CD4-positive, alpha-beta memory T cell (primary cell): ENCODE measurements at regions of chrX and their contacts with region 1.

Region 1: GRCh38 chrX:150587585-150588503 is 19.4 kb downstream of the MTM1 start:
- DNase-seq: peak in 4 of 5 donors; percentile 25 to 40 (median 32)
- H3K4me3 ChIP-seq: no peak overlapping the region
- H3K4me3 Mint-ChIP-seq: no peak overlapping the region
- H3K27ac ChIP-seq: no peak overlapping the region
- H3K27ac Mint-ChIP-seq: peak overlapping the region in 2 of 7 donors; percentile 17 to 71
- H3K4me1 ChIP-seq: peaks cover 4% of the 10 kb centered on the region
- H3K4me1 Mint-ChIP-seq: peaks cover 10 to 35% (median 29%) of the 10 kb centered on the region in 4 donors
- H3K27me3 ChIP-seq: no peaks in the 10 kb centered on the region
- H3K27me3 Mint-ChIP-seq: no peaks in the 10 kb centered on the region

Region 2: GRCh38 chrX:149950681-149951080 is 637.2 kb before region 1 on chrX:
- CTCF ChIA-PET with region 1: no interaction called
- POLR2A ChIA-PET with region 1: no interaction called
- intact Hi-C with region 1: no loop called
- DNase-seq: peak in 1 of 5 donors; percentile 19
- H3K4me3 ChIP-seq: no peak overlapping the region
- H3K4me3 Mint-ChIP-seq: no peak overlapping the region
- H3K27ac ChIP-seq: no peak overlapping the region
- H3K27ac Mint-ChIP-seq: no peak overlapping the region
- H3K4me1 ChIP-seq: no peaks in the 10 kb centered on the region
- H3K4me1 Mint-ChIP-seq: peaks cover 1 to 6% (median 5%) of the 10 kb centered on the region in 4 donors
- H3K27me3 ChIP-seq: no peaks in the 10 kb centered on the region
- H3K27me3 Mint-ChIP-seq: no peaks in the 10 kb centered on the region

Region 3: GRCh38 chrX:150486011-150486410 is 101.8 kb before region 1 on chrX:
- CTCF ChIA-PET with region 1: interaction called, 5 read pairs
- POLR2A ChIA-PET with region 1: no interaction called
- intact Hi-C with region 1: loop called (anchors 5 kb)
- DNase-seq: peak; percentile 41 to 49 (median 45)
- H3K4me3 ChIP-seq: no peak overlapping the region
- H3K4me3 Mint-ChIP-seq: no peak overlapping the region
- H3K27ac ChIP-seq: no peak overlapping the region
- H3K27ac Mint-ChIP-seq: no peak overlapping the region
- H3K4me1 ChIP-seq: peaks cover 17% of the 10 kb centered on the region
- H3K4me1 Mint-ChIP-seq: peaks cover 0 to 14% (median 6%) of the 10 kb centered on the region in 4 donors
- H3K27me3 ChIP-seq: no peaks in the 10 kb centered on the region
- H3K27me3 Mint-ChIP-seq: no peaks in the 10 kb centered on the region

Region 4: DNA sequence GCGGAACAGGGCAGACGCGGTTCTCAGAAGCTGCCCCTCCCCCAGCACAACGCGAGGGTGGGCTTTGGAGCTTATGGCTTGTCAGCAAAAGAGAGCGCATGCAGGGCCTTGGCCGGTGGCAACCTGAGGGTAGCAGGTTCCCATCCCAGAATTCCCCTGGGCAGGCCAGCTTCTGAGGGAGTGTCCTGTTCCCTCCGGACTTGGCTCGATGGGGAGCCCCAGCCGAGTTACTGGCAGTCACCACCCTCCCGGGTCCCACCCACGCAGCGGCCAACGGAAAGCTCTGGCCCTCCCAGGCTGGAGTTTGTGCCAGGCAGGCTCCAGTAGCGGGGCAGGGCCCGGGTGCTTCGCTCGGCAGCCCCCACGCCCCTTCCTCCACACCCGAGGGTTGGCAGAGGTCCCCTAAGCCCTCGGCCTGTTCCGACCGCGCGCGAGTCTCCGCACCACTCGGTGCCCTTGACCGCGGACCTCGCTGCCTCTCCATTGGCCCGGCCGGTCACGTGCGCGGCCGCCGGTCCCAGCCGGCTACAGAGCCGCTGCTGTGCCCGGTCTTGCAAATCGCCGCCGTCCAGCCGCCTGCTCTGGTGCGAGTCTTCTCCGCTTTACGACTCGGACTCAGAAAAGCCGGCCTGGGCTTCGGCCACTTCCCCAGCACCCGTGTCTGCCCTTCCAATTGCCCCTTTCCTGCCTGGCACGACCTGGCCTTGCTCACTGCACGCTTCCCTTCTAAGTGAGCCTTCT is 40.3 kb before region 1 on chrX:
- CTCF ChIA-PET with region 1: interaction called, 34 read pairs
- POLR2A ChIA-PET with region 1: no interaction called
- intact Hi-C with region 1: loop called (anchors 2 kb)
- DNase-seq: no peak
- H3K4me3 ChIP-seq: peak overlapping the region in 1 of 2 donors; percentile 35
- H3K4me3 Mint-ChIP-seq: peak overlapping the region; percentile 57 to 87 (median 79)
- H3K27ac ChIP-seq: no peak overlapping the region
- H3K27ac Mint-ChIP-seq: peak overlapping the region; percentile 37 to 93 (median 81)
- H3K4me1 ChIP-seq: peaks cover 30% of the 10 kb centered on the region
- H3K4me1 Mint-ChIP-seq: peaks cover 11 to 30% (median 19%) of the 10 kb centered on the region in 4 donors
- H3K27me3 ChIP-seq: no peaks in the 10 kb centered on the region
- H3K27me3 Mint-ChIP-seq: no peaks in the 10 kb centered on the region

Region 5: DNA sequence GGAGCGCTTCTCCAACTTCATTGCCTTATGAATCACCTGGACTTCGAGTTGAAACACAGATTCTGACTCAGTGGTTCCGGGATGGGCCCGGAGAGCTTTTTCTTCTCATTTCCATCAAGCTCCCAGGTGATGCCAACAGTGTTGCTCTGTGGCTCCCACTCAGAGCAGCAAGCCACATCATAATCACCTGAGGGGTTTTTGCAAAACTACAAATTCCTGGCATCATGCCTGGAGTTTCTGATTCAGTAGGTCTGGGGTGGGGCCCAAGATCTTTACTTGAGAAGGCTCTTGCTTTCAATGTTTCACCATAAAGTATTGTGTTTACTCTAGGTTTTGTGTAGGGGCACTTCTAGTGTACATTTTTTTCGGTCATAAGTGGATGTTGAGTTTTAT is 12.4 kb before region 1 on chrX:
- CTCF ChIA-PET with region 1: interaction called, 21 read pairs
- POLR2A ChIA-PET with region 1: interaction called, 3 read pairs
- intact Hi-C with region 1: loop called (anchors 1 kb)
- DNase-seq: peak in 4 of 5 donors; percentile 30 to 85 (median 46)
- H3K4me3 ChIP-seq: peak overlapping the region; percentile 41 to 57
- H3K4me3 Mint-ChIP-seq: peak overlapping the region; percentile 78 to 90 (median 84)
- H3K27ac ChIP-seq: peak overlapping the region; percentile 78
- H3K27ac Mint-ChIP-seq: peak overlapping the region; percentile 86 to 100 (median 92)
- H3K4me1 ChIP-seq: peaks cover 88% of the 10 kb centered on the region
- H3K4me1 Mint-ChIP-seq: peaks cover 72 to 90% (median 78%) of the 10 kb centered on the region in 4 donors
- H3K27me3 ChIP-seq: no peaks in the 10 kb centered on the region
- H3K27me3 Mint-ChIP-seq: no peaks in the 10 kb centered on the region

Region 6: GRCh38 chrX:150649096-150649870 is 61.4 kb after region 1 on chrX:
- CTCF ChIA-PET with region 1: no interaction called
- POLR2A ChIA-PET with region 1: no interaction called
- intact Hi-C with region 1: no loop called
- DNase-seq: no peak
- H3K4me3 ChIP-seq: no peak overlapping the region
- H3K4me3 Mint-ChIP-seq: no peak overlapping the region
- H3K27ac ChIP-seq: no peak overlapping the region
- H3K27ac Mint-ChIP-seq: peak overlapping the region in 4 of 7 donors; percentile 3 to 60 (median 49)
- H3K4me1 ChIP-seq: no peaks in the 10 kb centered on the region
- H3K4me1 Mint-ChIP-seq: peaks cover 0 to 6% (median 4%) of the 10 kb centered on the region in 4 donors
- H3K27me3 ChIP-seq: no peaks in the 10 kb centered on the region
- H3K27me3 Mint-ChIP-seq: no peaks in the 10 kb centered on the region